PC-9 (cell line): ENCODE measurements at regions of chr17 and their contacts with region 1.

Region 1: DNA sequence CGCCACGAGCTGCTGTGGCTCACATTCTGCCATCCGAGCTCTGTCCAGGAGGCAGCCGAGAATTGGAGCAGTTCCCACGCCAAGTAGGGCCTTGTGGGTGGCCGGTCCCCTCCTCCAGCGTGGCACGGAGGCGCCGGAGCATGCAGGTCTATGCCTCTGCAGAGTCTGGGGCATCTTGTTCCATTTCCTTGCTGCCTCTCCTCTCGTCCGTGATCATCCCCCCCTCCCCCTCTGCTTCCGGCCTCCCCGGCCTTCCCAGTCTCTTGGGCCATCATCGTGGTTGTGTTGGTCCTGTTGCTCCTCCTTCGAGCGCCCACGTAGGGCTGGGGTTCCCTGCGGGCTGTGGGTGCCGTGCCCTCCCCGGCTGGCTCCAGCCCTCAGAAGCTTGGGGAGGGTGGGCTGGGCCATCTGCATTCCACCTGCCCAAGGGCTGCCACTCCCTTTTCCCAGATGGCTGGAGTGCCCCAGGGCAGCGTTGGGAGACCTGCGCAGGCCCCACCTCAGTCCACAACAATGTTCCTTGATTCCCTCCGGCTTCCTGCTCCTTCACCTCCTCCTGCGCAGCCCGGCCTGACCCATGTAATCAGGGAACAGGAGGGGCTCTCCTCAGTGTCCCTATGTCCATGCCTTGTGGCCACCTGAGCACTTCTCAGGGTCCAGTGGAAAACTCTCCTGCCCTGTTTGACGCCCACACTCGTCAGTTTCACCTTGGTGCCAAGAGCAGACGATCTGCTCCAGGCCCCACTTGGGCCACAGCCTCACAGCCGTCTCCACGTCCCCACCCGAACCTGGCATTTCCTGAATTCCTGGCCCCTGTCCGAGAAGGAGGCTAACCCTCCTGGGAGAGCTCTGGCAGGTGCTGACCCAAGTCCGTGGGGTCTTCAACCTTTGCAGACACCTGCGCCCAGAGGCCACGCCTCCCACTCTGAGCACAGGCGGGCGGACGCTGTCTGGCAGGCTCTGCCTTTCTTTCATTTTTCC is 37.1 kb downstream of the BAIAP2 start:
- DNase-seq: peak; percentile 63 to 97
- H3K4me3 ChIP-seq: no peak overlapping the region
- H3K27ac ChIP-seq: 0 out of 2 replicates have a peak overlapping the region, but pooled peaks have one; percentile 19
- H3K4me1 ChIP-seq: no peaks in the 10 kb centered on the region
- H3K27me3 ChIP-seq: no peaks in the 10 kb centered on the region
- CTCF ChIP-seq: no peak

Region 2: DNA sequence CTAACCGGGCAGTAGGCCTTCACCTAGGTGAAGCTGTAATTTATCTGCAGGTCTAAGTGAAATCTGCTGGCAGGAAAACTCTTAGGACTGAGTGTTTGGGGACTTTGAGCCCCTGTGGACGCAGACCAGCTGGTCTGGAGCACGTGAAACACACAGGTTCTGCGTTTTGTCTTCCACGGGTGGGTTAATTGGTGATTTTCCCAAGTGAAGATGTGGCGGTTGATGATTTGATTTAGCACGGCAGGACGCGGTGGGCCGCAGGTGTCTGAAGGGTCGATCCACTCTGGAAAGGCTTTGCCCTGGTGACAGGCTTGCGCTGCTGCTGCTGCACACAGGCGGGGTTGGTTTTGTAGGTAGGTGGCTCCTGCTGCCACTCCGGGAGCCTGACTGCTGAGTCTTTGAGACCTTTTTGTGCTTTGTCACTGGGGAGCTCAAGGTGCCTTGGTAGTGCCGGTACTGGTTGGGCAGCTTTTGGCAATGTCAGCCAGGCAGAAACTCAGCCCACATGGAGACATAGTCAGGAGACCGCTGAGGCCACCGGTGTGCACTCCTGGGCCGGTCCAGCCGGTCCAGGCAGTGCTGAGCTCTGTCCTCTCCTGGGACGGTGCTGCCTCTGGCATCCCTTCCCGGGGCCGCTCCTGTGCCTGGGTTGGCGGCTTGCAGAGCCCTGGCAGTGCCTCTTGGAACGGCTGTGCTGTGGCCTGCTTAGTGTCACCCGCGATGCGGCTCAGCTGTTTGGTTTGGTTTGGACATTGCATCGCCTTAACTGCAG is 34.8 kb before region 1 on chr17:
- CTCF ChIA-PET with region 1: no interaction called
- POLR2A ChIA-PET with region 1: interaction called, 5 read pairs
- intact Hi-C with region 1: loop called (anchors 1 kb)
- DNase-seq: peak; percentile 95 to 96
- H3K4me3 ChIP-seq: peak overlapping the region; percentile 66
- H3K27ac ChIP-seq: peak overlapping the region; percentile 93
- H3K4me1 ChIP-seq: peaks cover 51% of the 10 kb centered on the region
- H3K27me3 ChIP-seq: no peaks in the 10 kb centered on the region
- CTCF ChIP-seq: no peak

Region 3: GRCh38 chr17:81044764-81045589 is 27.1 kb before region 1 on chr17:
- CTCF ChIA-PET with region 1: interaction called, 4 read pairs
- POLR2A ChIA-PET with region 1: interaction called, 14 read pairs
- intact Hi-C with region 1: loop called (anchors 1 kb)
- DNase-seq: peak; percentile 43 to 79
- H3K4me3 ChIP-seq: no peak overlapping the region
- H3K27ac ChIP-seq: peak overlapping the region; percentile 69
- H3K4me1 ChIP-seq: peaks cover 73% of the 10 kb centered on the region
- H3K27me3 ChIP-seq: no peaks in the 10 kb centered on the region
- CTCF ChIP-seq: no peak

Region 4: DNA sequence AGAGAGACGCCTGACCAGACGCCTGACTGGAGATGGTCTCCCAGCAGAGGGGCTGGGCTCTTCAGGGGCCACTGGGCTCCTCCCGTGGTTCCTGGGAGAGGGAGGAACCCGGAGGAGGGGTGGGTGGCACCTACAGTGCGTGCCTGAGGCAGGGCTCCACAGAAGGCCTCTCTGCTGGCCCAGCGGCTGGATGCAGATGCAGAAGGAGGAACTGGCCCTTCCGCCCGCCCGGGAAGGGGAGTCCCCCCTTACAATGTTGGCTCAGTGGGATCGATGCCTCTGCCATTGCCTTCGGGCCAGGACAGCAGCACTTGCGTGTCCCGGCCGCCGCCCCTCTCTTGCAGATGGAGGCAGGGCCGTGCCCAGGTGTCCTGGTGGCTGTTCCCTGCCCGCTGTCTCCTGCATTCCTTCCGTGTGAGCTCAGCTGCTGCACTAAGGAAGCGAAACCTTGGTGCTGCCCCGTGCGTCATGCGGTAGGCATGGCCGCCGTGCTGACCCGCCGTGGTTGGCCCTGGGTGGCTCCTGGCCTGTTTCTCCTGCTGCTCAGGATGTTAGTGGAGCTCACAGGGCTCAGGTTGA is 22.0 kb before region 1 on chr17:
- CTCF ChIA-PET with region 1: no interaction called
- POLR2A ChIA-PET with region 1: interaction called, 5 read pairs
- intact Hi-C with region 1: loop called (anchors 1 kb)
- DNase-seq: peak; percentile 96 to 97
- H3K4me3 ChIP-seq: peak overlapping the region; percentile 41; the same call in 1 of the 2 replicates
- H3K27ac ChIP-seq: peak overlapping the region; percentile 87
- H3K4me1 ChIP-seq: peaks cover 56% of the 10 kb centered on the region
- H3K27me3 ChIP-seq: no peaks in the 10 kb centered on the region
- CTCF ChIP-seq: no peak